GM23248 (cell line): ENCODE measurements at regions of chr7 and their contacts with region 1.

Region 1: GRCh38 chr7:116236020-116236630 is 25.8 kb downstream of the TES start:
- DNase-seq: peak; percentile 77
- H3K4me3 ChIP-seq: no peak overlapping the region
- H3K27ac ChIP-seq: no peak overlapping the region
- H3K4me1 ChIP-seq: peaks cover 30% of the 10 kb centered on the region
- H3K27me3 ChIP-seq: no peaks in the 10 kb centered on the region

Region 2: DNA sequence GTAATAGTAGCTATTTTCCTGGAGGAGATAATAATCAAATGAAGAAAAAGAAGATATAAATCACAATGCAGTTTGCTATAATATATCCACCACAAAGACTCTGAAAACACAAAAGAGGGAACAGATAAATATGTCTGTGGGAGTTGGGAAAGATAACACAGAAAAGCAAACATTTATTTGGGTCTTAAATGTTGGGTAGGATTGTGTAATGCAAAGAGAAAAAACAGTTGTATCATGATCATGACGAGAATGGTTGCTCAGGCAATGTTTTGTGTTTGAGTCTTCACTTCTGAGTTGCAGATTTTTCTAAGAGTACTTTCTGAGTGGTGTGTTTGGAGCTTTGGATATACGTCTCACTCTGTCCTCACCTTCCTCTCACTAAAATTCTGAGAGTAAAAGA is 643.0 kb before region 1 on chr7:
- in situ Hi-C with region 1: no loop called
- DNase-seq: no peak
- H3K4me3 ChIP-seq: no peak overlapping the region
- H3K27ac ChIP-seq: no peak overlapping the region
- H3K4me1 ChIP-seq: no peaks in the 10 kb centered on the region
- H3K27me3 ChIP-seq: no peaks in the 10 kb centered on the region

Region 3: DNA sequence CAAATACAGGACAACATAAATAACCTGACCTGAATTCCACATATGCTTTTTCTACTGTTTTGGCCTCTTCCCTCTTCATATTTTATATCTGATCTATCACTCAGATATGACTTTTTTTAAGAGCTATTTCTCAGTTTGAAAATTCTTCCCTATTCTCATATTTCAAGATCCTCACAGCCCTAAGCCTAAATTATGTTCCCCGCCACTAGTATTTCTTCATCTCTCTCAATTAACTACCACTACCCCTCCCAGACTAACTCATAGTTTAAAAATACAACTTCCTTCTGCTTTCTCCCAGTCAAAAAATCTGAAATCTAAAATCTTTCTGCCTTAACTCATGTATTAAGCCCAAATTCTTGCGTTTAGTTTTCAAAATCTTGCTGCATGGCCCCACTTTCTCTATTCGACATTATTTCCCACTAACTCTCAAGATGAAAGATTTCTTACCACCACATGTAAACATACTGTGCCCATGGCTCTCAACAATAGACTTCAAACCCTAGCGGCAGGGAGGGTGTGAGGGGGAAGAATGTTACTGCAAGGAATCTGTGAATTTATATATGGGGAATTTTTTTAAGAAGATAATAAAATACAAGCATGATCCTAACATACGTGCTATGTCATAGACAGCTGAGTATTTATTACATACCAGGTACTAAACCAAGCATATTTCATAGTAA is 270.2 kb before region 1 on chr7:
- in situ Hi-C with region 1: no loop called
- DNase-seq: no peak
- H3K4me3 ChIP-seq: no peak overlapping the region
- H3K27ac ChIP-seq: no peak overlapping the region
- H3K4me1 ChIP-seq: no peaks in the 10 kb centered on the region
- H3K27me3 ChIP-seq: 0 out of 2 replicates have a peak, but pooled peaks cover 1% of the 10 kb centered on the region

Region 4: GRCh38 chr7:116173051-116174028 is 62.8 kb before region 1 on chr7:
- in situ Hi-C with region 1: loop called (anchors 5 kb)
- DNase-seq: peak; percentile 70
- H3K4me3 ChIP-seq: no peak overlapping the region
- H3K27ac ChIP-seq: no peak overlapping the region
- H3K4me1 ChIP-seq: peaks cover 58% of the 10 kb centered on the region
- H3K27me3 ChIP-seq: no peaks in the 10 kb centered on the region